ENCODE measurements at regions of chr5 and their contacts with region 1.

Region 1: DNA sequence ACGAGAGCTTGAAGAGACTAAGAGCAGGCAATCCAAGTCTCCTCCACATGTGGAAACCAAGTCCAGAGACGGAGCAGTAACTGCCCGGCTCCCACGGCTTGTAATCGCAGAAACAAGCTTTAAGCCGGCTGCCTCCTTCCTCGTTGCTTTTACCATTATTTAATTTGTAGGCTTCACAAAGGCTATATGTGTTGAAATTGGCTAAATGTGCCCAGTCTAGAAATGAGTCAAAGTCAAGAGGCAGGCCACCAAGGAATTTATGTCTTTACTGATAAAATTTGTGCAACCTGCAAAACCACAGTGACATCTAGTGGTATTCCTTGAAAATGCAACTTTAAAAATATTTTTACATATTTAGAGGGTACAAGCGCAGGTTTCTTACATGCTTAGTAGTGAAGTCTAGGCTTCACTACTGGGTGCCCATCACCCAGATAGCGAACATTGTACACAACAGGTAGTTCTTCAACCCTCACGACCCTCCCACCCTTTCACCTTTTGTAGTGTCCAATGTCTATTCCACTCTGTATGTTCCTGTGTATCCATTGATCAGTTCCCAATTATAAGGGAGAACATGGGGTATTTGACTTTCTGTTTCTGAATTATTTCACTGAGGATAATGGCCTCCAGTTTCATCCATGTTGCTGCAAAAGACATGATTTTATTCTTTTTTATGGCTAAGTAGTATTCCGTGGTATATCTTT is 33.5 kb upstream of the EBF1 start:
- DNase-seq: peak; percentile 16
- H3K4me3 Mint-ChIP-seq: no peak overlapping the region
- H3K27ac Mint-ChIP-seq: no peak overlapping the region
- H3K4me1 Mint-ChIP-seq: peaks cover 8% of the 10 kb centered on the region
- H3K27me3 Mint-ChIP-seq: peaks cover 63% of the 10 kb centered on the region
- CTCF ChIP-seq: peak; percentile 67

Region 2: GRCh38 chr5:157761690-157762621 is 1371.2 kb before region 1 on chr5:
- CTCF ChIA-PET with region 1: no interaction called
- intact Hi-C with region 1: loop called (anchors 2 kb)
- DNase-seq: peak; percentile 62
- H3K4me3 Mint-ChIP-seq: no peak overlapping the region
- H3K27ac Mint-ChIP-seq: no peak overlapping the region
- H3K4me1 Mint-ChIP-seq: no peaks in the 10 kb centered on the region
- H3K27me3 Mint-ChIP-seq: no peaks in the 10 kb centered on the region
- CTCF ChIP-seq: peak; percentile 58

Region 3: DNA sequence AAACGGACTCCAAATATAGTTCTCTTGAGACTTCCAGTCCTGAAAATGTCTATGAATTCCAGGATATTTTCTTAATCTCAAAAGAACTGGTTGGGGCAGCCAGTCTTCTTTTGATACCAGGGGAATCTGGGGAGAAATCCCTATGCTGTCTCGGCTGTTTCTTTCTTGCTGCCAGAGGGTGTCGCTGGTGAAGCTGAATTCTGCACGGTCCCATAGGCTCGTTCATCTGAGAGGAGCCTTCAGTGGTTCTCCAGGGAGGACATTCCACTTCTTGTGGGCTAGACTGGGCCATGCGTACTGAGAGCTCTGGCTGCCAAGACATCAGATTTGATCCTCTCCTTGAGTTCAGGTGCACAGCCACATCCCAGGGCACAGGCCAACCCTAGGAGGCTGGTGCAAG is 1119.3 kb before region 1 on chr5:
- CTCF ChIA-PET with region 1: no interaction called
- intact Hi-C with region 1: loop called (anchors 10 kb)
- DNase-seq: peak; percentile 34
- H3K4me3 Mint-ChIP-seq: no peak overlapping the region
- H3K27ac Mint-ChIP-seq: no peak overlapping the region
- H3K4me1 Mint-ChIP-seq: no peaks in the 10 kb centered on the region
- H3K27me3 Mint-ChIP-seq: peaks cover 12% of the 10 kb centered on the region
- CTCF ChIP-seq: no peak

Region 4: DNA sequence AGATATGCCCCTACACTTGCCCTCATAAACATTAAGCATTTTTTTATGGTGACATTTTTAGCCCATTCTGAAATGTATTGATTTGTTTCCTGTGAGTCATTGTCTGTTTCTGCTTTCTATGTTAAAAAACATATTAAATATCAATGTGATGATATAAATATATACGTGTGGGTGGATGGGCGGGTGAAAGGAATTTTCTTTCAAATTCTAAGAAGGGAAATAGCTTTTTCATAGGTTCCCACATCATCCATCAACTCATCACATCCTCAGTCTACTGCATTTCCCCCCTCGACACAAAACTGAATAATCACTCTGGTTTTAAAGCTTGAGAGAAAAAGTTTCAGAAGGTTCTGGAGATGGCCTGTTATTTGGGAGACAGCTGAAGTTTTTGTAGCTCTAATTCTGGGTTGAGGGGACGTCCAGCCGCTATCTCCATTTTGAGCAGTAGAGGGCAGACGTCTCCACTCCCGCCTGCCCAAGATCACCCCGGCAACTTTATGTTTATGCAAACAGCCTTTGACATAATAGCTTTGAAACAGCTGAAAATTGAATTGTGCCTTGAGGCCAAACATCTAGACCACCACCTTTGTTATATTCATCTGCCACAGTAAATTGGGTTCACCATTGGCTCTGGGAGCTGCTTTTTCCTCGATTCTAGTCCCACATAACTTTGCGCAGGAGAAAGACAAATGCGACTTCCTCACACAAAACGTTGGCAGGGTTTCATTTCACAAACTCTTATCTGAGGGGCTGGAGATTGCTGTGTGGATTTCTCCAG is 1058.0 kb before region 1 on chr5:
- CTCF ChIA-PET with region 1: no interaction called
- intact Hi-C with region 1: loop called (anchors 2 kb)
- DNase-seq: peak; percentile 74
- H3K4me3 Mint-ChIP-seq: peak overlapping the region; percentile 43
- H3K27ac Mint-ChIP-seq: peak overlapping the region; percentile 55
- H3K4me1 Mint-ChIP-seq: peaks cover 8% of the 10 kb centered on the region
- H3K27me3 Mint-ChIP-seq: peaks cover 40% of the 10 kb centered on the region
- CTCF ChIP-seq: peak; percentile 70

Region 5: GRCh38 chr5:158174918-158175851 is 958.0 kb before region 1 on chr5:
- CTCF ChIA-PET with region 1: no interaction called
- intact Hi-C with region 1: loop called (anchors 1 kb)
- DNase-seq: peak; percentile 71
- H3K4me3 Mint-ChIP-seq: no peak overlapping the region
- H3K27ac Mint-ChIP-seq: no peak overlapping the region
- H3K4me1 Mint-ChIP-seq: peaks cover 5% of the 10 kb centered on the region
- H3K27me3 Mint-ChIP-seq: peaks cover 37% of the 10 kb centered on the region
- CTCF ChIP-seq: peak; percentile 68

Region 6: GRCh38 chr5:159017786-159018185 is 115.4 kb before region 1 on chr5:
- CTCF ChIA-PET with region 1: no interaction called
- intact Hi-C with region 1: no loop called
- DNase-seq: peak; percentile 54
- H3K4me3 Mint-ChIP-seq: no peak overlapping the region
- H3K27ac Mint-ChIP-seq: no peak overlapping the region
- H3K4me1 Mint-ChIP-seq: peaks cover 7% of the 10 kb centered on the region
- H3K27me3 Mint-ChIP-seq: no peaks in the 10 kb centered on the region
- CTCF ChIP-seq: no peak